ENCODE measurements at regions of chr18 and their contacts with region 1.

Region 1: DNA sequence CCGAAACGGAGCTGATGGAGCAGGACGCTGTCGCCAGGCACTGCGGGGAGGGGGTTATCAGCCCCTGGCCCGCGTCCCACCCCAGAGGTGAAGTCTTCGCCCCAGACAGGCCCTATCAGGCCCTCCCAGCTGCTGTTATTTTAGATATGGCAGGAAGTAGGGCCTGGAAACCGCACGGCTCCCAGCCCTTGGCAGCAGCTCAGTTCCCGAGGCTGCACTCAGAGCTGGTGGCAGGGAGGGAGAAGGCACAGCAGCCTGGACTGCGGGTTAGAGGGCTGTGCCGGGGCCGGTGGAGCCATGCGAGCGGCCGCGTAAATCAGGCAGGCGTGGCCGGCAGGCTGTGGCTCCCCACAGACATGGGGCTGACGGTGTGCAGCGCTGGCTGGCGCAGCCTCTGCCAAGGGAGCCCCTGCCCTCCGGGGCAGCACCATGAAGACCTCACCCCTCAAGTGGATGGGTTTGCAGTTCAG is 111.4 kb downstream of the NFATC1 start:
- DNase-seq: peak; percentile 57
- H3K4me3 Mint-ChIP-seq: peak overlapping the region; percentile 64
- H3K27ac Mint-ChIP-seq: peak overlapping the region; percentile 89
- H3K4me1 Mint-ChIP-seq: peaks cover 65% of the 10 kb centered on the region
- H3K27me3 Mint-ChIP-seq: no peaks in the 10 kb centered on the region

Region 2: GRCh38 chr18:79186649-79187048 is 320.5 kb before region 1 on chr18:
- CTCF ChIA-PET with region 1: no interaction called
- intact Hi-C with region 1: no loop called
- DNase-seq: no peak
- H3K4me3 Mint-ChIP-seq: no peak overlapping the region
- H3K27ac Mint-ChIP-seq: no peak overlapping the region
- H3K4me1 Mint-ChIP-seq: peaks cover 7% of the 10 kb centered on the region
- H3K27me3 Mint-ChIP-seq: no peaks in the 10 kb centered on the region

Region 3: GRCh38 chr18:79496978-79497637 is 10.0 kb before region 1 on chr18:
- CTCF ChIA-PET with region 1: no interaction called
- intact Hi-C with region 1: loop called (anchors 1 kb)
- DNase-seq: no peak
- H3K4me3 Mint-ChIP-seq: no peak overlapping the region
- H3K27ac Mint-ChIP-seq: no peak overlapping the region
- H3K4me1 Mint-ChIP-seq: peaks cover 15% of the 10 kb centered on the region
- H3K27me3 Mint-ChIP-seq: no peaks in the 10 kb centered on the region